ENCODE measurements at regions of chr1 and their contacts with region 1.

Region 1: DNA sequence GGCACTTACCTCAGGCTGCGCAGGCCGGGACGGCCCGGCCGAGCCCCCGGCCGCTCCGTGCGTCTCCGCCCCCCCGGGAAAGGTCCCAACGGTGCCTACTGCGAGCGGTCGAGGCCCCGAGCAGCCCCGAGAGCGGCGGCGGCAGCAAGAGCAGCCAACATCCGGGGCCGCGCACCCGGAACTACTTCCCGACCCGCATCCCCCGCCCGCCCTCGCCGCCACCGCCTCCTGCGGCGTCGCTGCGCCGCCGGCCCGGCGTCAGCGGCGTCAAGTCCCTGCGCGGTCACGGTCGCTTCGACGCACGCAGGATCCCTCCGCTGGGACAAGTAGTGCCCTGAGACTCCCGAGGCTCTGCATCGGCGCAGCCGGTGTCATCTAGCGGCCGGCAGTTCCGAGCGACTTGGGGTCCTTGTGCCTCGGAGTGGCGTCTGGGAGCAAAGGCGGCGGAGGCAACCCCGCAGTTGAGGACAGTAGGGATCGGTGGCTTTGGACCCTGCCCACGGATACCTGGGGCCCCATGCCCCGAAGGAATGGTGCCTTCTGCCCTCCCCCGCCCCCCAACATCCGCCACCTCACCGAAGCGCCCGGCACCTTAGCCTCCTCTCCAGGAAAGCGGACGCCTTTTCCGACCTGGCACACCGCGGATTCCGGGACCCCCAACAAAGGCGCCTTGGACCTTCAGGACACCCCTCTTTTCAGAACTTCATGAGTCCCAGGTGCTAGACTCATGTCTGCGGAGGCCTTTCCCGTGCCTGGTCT is at the start of gene FOXJ3:
- DNase-seq: peak; percentile 90 to 97 (median 95)
- H3K4me3 ChIP-seq: peak within 1 kb of the TSS; percentile 74 to 98 (median 98)
- H3K27ac ChIP-seq: peak within 1 kb of the TSS in 4 of 5 donors; percentile 85 to 97 (median 90)
- H3K4me1 ChIP-seq: peaks cover 18 to 28% of the 10 kb centered on the region in 2 donors
- H3K27me3 ChIP-seq: no peaks in the 10 kb centered on the region
- CTCF ChIP-seq: peak in 1 of 6 experiments; percentile 32
- POLR2A ChIP-seq: peak; percentile 56 to 84
- total RNA-seq, gene FOXJ3: 19.7 to 58.5 (median 33.5) TPM

Region 2: GRCh38 chr1:41868599-41868998 is 466.6 kb before region 1 on chr1:
- intact Hi-C with region 1: no loop called
- DNase-seq: no peak
- H3K4me3 ChIP-seq: no peak overlapping the region
- H3K27ac ChIP-seq: no peak overlapping the region
- H3K4me1 ChIP-seq: peaks cover 0 to 10% of the 10 kb centered on the region in 2 donors
- H3K27me3 ChIP-seq: no peaks in the 10 kb centered on the region
- CTCF ChIP-seq: no peak
- POLR2A ChIP-seq: no peak

Region 3: DNA sequence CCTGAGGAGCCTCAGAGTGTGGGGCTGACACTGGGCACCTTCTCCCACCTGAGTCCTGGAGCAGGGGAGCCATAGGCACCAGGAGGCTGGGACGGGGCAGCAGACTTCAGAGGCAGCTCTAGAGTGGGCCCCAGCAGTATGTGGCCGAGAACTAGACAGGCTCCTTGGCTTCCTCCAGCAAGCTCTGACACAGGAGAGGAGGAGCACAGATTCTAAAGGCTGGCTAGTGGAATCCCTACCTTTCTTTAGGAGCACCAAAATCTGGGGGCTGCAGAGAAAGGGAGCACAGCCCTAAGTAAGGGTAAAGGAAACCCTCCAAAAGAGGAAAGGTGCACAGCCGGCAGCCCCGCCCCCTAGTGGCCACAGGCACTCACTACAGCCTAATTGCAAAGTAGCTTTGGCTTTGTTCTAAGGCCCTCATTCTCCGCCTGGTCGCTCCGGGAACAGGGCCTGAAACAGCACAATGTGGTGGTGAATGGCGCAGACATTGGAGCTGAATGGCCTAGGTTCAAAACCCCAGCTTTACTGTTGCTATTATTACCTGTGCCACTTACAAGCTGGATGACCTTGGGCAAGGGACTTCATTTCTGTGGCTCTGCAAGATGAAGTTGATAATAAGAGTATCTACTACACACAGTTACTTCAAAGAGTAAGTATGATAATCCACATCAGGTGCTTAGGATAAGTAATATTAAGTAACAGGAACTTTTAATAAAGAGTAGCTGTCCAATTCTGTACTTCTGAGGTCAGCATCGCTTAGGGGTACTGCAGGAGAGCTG is 161.9 kb before region 1 on chr1:
- intact Hi-C with region 1: loop called (anchors 5 to 10 kb)
- DNase-seq: peak; percentile 53 to 82 (median 66)
- H3K4me3 ChIP-seq: no peak overlapping the region
- H3K27ac ChIP-seq: peak overlapping the region; percentile 3 to 79 (median 67)
- H3K4me1 ChIP-seq: peaks cover 21 to 41% of the 10 kb centered on the region in 2 donors
- H3K27me3 ChIP-seq: no peaks in the 10 kb centered on the region
- CTCF ChIP-seq: peak; percentile 83 to 96 (median 92)
- POLR2A ChIP-seq: no peak

Region 4: DNA sequence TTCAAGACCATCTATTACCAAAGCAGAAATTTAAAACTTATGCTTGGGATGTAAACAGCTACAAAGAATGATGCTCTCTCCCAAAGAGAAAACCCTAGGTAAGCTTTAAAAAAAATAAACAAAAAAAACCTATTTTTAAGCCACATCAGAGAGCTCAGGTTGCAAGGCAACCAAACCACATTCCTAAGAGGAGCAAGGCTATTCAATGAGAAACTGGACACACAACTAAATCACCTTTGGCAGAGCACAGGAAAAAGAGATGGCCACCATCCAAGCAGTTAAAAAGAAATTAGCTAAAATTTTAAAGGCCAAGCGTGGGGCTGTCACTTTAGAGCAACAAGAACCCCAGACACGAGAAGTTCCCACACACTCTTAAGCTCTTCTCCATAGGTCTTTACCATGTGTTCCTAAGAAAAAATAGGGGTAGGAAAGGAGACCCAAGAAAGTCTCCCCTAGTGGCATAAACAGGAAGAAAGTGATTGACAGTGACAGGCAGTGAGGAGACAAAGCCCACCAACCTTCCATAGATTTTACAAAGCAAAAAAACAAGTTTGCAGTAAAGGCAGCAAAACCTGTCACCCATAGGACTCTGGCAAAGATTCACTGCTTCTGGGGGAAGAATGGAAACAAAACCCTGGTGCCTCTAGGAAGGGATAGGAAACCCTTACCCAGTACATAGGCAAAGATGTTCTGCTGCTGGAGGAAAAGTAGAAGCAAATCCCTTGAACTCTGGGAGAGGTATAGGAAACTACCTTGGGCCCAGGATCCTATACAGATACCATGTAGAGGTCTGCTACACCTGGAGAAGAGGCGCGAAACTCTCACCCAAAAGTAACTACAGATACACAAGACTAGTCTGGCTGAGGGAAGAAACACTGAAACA is 68.7 kb before region 1 on chr1:
- intact Hi-C with region 1: loop called in 1 of 2 experiments (anchors 10 kb)
- DNase-seq: peak in 2 of 7 donors; percentile 13 to 16
- H3K4me3 ChIP-seq: no peak overlapping the region
- H3K27ac ChIP-seq: no peak overlapping the region
- H3K4me1 ChIP-seq: peaks cover 0 to 15% of the 10 kb centered on the region in 2 donors
- H3K27me3 ChIP-seq: no peaks in the 10 kb centered on the region
- CTCF ChIP-seq: no peak
- POLR2A ChIP-seq: no peak

Region 5: GRCh38 chr1:42462828-42463763 is 127.9 kb after region 1 on chr1 and contains the start of gene CCDC30:
- intact Hi-C with region 1: loop called in 1 of 2 experiments (anchors 10 kb)
- DNase-seq: peak; percentile 96 to 100 (median 99)
- H3K4me3 ChIP-seq: peak within 1 kb of the TSS in 3 of 4 donors; percentile 26 to 56 (median 47)
- H3K27ac ChIP-seq: peak within 1 kb of the TSS; percentile 9 to 72 (median 29)
- H3K4me1 ChIP-seq: peaks cover 6 to 33% of the 10 kb centered on the region in 2 donors
- H3K27me3 ChIP-seq: no peaks in the 10 kb centered on the region
- CTCF ChIP-seq: no peak
- POLR2A ChIP-seq: no peak
- total RNA-seq, gene CCDC30: 1.8 to 8.3 (median 5.4) TPM

Measured in adrenal gland (tissue), 19 donors.